BJ (cell line): ENCODE measurements at regions of chr3 and their contacts with region 1.

Region 1: DNA sequence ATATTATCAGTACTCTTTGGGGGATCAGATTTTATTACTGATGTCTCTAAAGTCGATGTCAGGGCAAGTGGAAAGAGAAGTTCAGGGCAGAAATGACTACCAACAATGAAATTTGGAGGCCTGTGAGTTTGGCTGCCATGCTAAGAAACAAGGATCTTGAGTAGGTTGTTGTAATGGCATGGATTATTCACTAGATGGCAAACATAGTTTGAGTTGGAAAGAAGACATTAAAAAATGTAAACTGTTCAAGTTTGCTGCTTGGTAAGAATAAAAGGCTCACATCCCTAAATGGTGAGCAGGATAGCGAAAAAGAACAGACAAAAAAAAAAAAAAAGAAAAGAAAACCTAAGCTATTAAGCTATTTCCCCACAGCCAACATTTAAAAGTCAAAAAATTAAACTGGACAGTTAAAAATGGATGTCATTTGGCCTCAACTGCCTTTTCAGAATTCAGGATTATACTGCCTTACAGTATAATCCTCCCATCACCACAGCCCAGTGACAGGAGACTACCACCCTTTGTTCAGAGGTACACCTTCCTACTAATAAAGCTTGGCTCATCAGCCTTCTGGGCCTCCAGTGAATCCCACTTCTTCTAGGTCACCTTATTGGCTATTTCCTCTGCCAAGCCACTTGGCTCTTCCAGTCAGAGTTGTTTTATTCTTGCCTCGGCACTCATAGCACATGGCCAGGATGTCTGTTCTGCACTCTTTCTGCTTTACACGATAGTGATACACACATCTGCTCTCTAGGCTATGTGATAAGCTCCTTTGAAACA is 163.7 kb downstream of the PLD1 start:
- DNase-seq: peak; percentile 19
- H3K4me3 ChIP-seq: no peak overlapping the region
- H3K27me3 ChIP-seq: no peaks in the 10 kb centered on the region
- CTCF ChIP-seq: peak; percentile 57

Region 2: GRCh38 chr3:171829841-171830517 is 183.4 kb after region 1 on chr3:
- CTCF ChIA-PET with region 1: interaction called, 12 read pairs
- POLR2A ChIA-PET with region 1: no interaction called
- DNase-seq: no peak
- H3K4me3 ChIP-seq: no peak overlapping the region
- H3K27me3 ChIP-seq: no peaks in the 10 kb centered on the region
- CTCF ChIP-seq: peak; percentile 82

Region 3: GRCh38 chr3:172476347-172476746 is 829.8 kb after region 1 on chr3:
- CTCF ChIA-PET with region 1: interaction called, 20 read pairs
- POLR2A ChIA-PET with region 1: no interaction called
- DNase-seq: no peak
- H3K4me3 ChIP-seq: no peak overlapping the region
- H3K27me3 ChIP-seq: no peaks in the 10 kb centered on the region
- CTCF ChIP-seq: no peak